CD4-positive, alpha-beta memory T cell (primary cell): ENCODE measurements at regions of chr19 and their contacts with region 1.

Region 1: GRCh38 chr19:14689598-14690503 is at the start of gene ZNF333:
- DNase-seq: peak; percentile 95 to 97 (median 95)
- H3K4me3 ChIP-seq: peak within 1 kb of the TSS; percentile 20 to 84
- H3K4me3 Mint-ChIP-seq: peak within 1 kb of the TSS; percentile 93 to 98 (median 96)
- H3K27ac ChIP-seq: peak within 1 kb of the TSS; percentile 79
- H3K27ac Mint-ChIP-seq: peak within 1 kb of the TSS; percentile 96 to 100 (median 99)
- H3K4me1 ChIP-seq: peaks cover 13% of the 10 kb centered on the region
- H3K4me1 Mint-ChIP-seq: peaks cover 11 to 29% (median 16%) of the 10 kb centered on the region in 4 donors
- H3K27me3 ChIP-seq: no peaks in the 10 kb centered on the region
- H3K27me3 Mint-ChIP-seq: no peaks in the 10 kb centered on the region
- total RNA-seq, gene ZNF333: 45.9 to 48.3 TPM

Region 2: DNA sequence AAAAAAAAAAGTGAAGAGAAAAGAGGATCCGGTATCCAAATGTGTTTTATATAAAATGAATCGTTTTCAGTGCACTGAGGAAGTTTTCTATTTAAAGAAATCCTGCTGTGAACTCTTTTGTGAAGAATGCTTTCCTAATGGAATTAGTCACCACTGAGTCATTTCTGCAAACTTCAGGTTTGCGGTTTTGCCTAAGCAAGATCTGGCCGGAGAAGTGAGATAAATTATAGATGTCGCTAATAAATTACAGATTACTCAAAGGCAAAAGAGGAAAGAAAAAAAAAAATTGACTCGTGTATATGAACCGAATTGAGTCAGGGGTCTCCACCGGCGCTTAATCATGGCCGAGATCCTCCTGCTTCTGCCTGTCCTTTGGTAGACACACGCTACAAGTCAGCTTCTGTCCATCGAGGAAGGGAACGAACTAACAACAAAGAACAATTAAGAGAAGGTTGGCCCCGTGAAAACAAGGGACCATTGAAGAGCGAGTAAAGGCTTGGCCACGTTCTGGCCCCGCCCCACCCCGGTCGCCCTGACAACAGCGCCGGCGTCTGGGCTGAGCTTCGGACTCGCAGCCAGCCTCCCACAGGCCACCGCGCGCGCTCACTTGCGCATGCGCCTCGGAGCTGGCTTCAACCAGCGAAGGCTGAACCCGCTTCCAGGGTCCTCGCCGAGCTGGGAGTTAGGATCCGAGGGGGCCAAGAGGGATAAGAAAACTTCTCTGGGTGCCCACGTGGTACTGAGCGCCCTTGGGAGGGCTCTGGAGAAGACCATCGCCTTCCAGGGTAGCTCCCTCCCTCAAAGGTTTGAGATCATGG is 958.5 kb before region 1 on chr19:
- CTCF ChIA-PET with region 1: interaction called, 3 read pairs
- POLR2A ChIA-PET with region 1: no interaction called
- intact Hi-C with region 1: loop called (anchors 2 kb)
- DNase-seq: peak; percentile 92 to 93 (median 92)
- H3K4me3 ChIP-seq: peak overlapping the region; percentile 79 to 87
- H3K4me3 Mint-ChIP-seq: peak overlapping the region; percentile 89 to 97 (median 92)
- H3K27ac ChIP-seq: peak overlapping the region; percentile 59
- H3K27ac Mint-ChIP-seq: peak overlapping the region; percentile 73 to 97 (median 94)
- H3K4me1 ChIP-seq: peaks cover 19% of the 10 kb centered on the region
- H3K4me1 Mint-ChIP-seq: peaks cover 6 to 19% (median 10%) of the 10 kb centered on the region in 4 donors
- H3K27me3 ChIP-seq: no peaks in the 10 kb centered on the region
- H3K27me3 Mint-ChIP-seq: no peaks in the 10 kb centered on the region

Region 3: GRCh38 chr19:14571695-14572490 is 118.0 kb before region 1 on chr19 and contains the start of gene NDUFB7:
- CTCF ChIA-PET with region 1: interaction called, 232 read pairs
- POLR2A ChIA-PET with region 1: interaction called, 43 read pairs
- intact Hi-C with region 1: loop called (anchors 1 kb)
- DNase-seq: peak; percentile 91 to 93 (median 93)
- H3K4me3 ChIP-seq: peak within 1 kb of the TSS; percentile 76 to 91
- H3K4me3 Mint-ChIP-seq: peak within 1 kb of the TSS; percentile 95 to 97 (median 96)
- H3K27ac ChIP-seq: peak within 1 kb of the TSS; percentile 68
- H3K27ac Mint-ChIP-seq: peak within 1 kb of the TSS; percentile 89 to 96 (median 93)
- H3K4me1 ChIP-seq: peaks cover 33% of the 10 kb centered on the region
- H3K4me1 Mint-ChIP-seq: peaks cover 16 to 55% (median 43%) of the 10 kb centered on the region in 4 donors
- H3K27me3 ChIP-seq: no peaks in the 10 kb centered on the region
- H3K27me3 Mint-ChIP-seq: no peaks in the 10 kb centered on the region
- total RNA-seq, gene NDUFB7: 56.6 to 67.2 TPM

Region 4: GRCh38 chr19:14677464-14677863 is 12.4 kb before region 1 on chr19:
- CTCF ChIA-PET with region 1: interaction called, 10 read pairs
- POLR2A ChIA-PET with region 1: interaction called, 8 read pairs
- intact Hi-C with region 1: no loop called
- DNase-seq: peak in 1 of 5 donors; percentile 17
- H3K4me3 ChIP-seq: no peak overlapping the region
- H3K4me3 Mint-ChIP-seq: no peak overlapping the region
- H3K27ac ChIP-seq: no peak overlapping the region
- H3K27ac Mint-ChIP-seq: no peak overlapping the region
- H3K4me1 ChIP-seq: peaks cover 18% of the 10 kb centered on the region
- H3K4me1 Mint-ChIP-seq: peaks cover 0 to 16% (median 5%) of the 10 kb centered on the region in 4 donors
- H3K27me3 ChIP-seq: no peaks in the 10 kb centered on the region
- H3K27me3 Mint-ChIP-seq: peaks cover 10 to 12% of the 10 kb centered on the region in 2 donors